ENCODE measurements at regions of chr13 and their contacts with region 1.

Region 1: GRCh38 chr13:49356223-49356622 is 87.6 kb downstream of the CAB39L start:
- DNase-seq: no peak
- ATAC-seq: peak; percentile 90
- H3K4me3 ChIP-seq: no peak overlapping the region
- H3K27ac ChIP-seq: peak overlapping the region in 1 of 2 donors; percentile 82
- H3K4me1 ChIP-seq: peaks cover 4 to 5% of the 10 kb centered on the region in 2 donors
- H3K27me3 ChIP-seq: no peaks in the 10 kb centered on the region

Region 2: GRCh38 chr13:49314344-49314882 is 41.8 kb before region 1 on chr13:
- intact Hi-C with region 1: loop called (anchors 5 kb)
- DNase-seq: no peak
- ATAC-seq: no peak
- H3K4me3 ChIP-seq: no peak overlapping the region
- H3K27ac ChIP-seq: peak overlapping the region; percentile 94 to 95
- H3K4me1 ChIP-seq: peaks cover 2% of the 10 kb centered on the region in 2 donors
- H3K27me3 ChIP-seq: no peaks in the 10 kb centered on the region

Measured in aorta (tissue), 5 donors.